ENCODE measurements at regions of chr18 and their contacts with region 1.

Region 1: DNA sequence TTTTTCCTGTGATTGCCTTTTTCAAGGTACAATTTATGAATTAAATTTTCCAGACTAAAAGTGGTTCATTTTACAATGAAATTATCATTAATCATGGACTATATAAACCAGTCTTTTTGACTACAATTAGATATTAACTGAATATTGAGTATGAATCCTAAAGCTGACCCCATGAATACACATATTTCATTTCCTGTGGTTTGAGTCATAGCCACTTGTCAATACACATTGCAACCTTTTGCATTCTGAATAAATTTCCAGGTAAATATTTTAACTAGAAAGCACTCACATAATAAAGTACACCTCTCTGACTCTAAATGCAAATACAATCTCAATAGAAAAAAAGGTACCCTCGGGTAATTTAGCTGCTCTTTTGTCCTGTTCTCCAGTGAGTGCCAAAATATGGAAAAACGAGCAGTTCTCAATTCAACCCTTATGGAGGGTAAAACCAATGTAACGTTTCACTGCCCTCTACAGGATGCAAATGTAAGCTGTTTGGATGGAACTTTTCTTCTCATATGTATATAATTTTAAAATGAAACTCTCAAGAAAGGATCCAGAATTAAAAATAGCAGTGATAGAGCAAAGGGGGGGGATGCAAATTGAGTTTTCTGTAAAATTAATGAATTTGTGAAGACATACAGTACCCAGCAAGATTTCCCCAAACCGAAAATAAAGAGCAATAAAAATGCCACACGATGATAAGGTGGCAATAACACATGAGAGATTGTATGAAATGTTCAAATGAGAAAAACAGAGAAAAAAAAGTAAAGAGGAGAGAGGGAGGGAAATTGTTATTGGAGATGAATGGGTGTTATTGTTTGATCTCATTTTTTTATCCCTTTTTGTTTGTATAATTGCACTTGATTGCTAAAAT is 1795.7 kb upstream of the PIK3C3 start:
- DNase-seq: peak; percentile 41
- ATAC-seq: peak; percentile 85
- H3K4me3 ChIP-seq: peak overlapping the region; percentile 49; the same call in 1 of the 2 replicates
- H3K27ac ChIP-seq: no peak overlapping the region
- H3K4me1 ChIP-seq: no peaks in the 10 kb centered on the region; the same call in 1 of the 2 replicates
- H3K27me3 ChIP-seq: no peaks in the 10 kb centered on the region
- CTCF ChIP-seq: peak; percentile 63

Region 2: GRCh38 chr18:39587586-39587985 is 571.8 kb before region 1 on chr18:
- CTCF ChIA-PET with region 1: no interaction called
- POLR2A ChIA-PET with region 1: no interaction called
- intact Hi-C with region 1: loop called (anchors 10 kb)
- DNase-seq: no peak
- ATAC-seq: no peak
- H3K4me3 ChIP-seq: no peak overlapping the region
- H3K27ac ChIP-seq: no peak overlapping the region
- H3K4me1 ChIP-seq: no peaks in the 10 kb centered on the region
- H3K27me3 ChIP-seq: no peaks in the 10 kb centered on the region
- CTCF ChIP-seq: no peak

Region 3: GRCh38 chr18:39799006-39799405 is 360.4 kb before region 1 on chr18:
- CTCF ChIA-PET with region 1: interaction called, 3 read pairs
- POLR2A ChIA-PET with region 1: no interaction called
- intact Hi-C with region 1: loop called (anchors 10 kb)
- DNase-seq: peak; percentile 16
- ATAC-seq: peak; percentile 65
- H3K4me3 ChIP-seq: peak overlapping the region; percentile 86
- H3K27ac ChIP-seq: no peak overlapping the region
- H3K4me1 ChIP-seq: no peaks in the 10 kb centered on the region
- H3K27me3 ChIP-seq: no peaks in the 10 kb centered on the region
- CTCF ChIP-seq: no peak

Region 4: DNA sequence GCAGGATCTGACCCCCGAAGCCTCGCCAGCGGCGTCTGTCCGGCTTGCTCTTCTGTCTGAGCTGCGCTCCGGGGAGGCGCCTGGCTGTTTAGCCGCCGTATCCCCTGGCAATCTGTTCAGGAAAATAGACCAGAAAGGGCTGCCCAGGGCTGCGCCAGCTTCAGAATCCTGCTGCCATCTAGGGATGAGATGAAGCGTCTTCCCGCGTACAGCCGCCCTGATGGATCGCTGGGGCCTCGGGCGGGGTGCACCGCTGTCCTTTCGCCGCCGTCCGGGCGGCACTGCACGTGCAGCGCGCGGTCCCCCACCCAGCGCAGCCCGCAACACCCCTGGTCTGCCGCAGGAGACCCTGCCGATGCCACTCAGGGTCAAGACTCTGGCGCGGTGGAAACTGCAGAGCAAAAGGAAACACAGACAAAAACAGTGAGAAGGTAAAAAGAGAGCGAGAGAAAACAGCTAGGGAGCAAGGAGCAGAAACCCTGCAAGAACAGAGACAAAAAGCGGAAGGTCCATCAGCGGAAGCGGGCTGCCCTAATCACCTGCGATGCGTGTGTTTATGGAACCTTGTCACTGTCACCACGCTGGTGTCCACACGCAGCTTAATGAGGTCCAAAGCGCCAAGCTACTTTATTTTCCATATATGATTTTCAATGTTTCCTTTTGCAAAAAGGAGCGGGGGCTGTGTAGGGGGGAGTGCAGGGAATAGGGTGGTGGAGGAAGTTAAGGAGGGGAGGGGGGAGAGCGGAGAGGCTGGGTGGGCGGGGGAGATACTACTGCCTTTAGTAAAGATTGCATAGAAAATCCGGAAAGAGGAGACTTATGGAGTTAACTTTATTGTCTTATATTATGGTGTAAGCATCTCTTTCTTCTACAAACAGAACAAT is 317.7 kb before region 1 on chr18:
- CTCF ChIA-PET with region 1: interaction called, 3 read pairs
- POLR2A ChIA-PET with region 1: no interaction called
- intact Hi-C with region 1: loop called (anchors 5 kb)
- DNase-seq: peak; percentile 35
- ATAC-seq: peak; percentile 96
- H3K4me3 ChIP-seq: peak overlapping the region; percentile 73
- H3K27ac ChIP-seq: no peak overlapping the region
- H3K4me1 ChIP-seq: no peaks in the 10 kb centered on the region
- H3K27me3 ChIP-seq: no peaks in the 10 kb centered on the region
- CTCF ChIP-seq: peak; percentile 36; the same call in 1 of the 2 replicates

Region 5: DNA sequence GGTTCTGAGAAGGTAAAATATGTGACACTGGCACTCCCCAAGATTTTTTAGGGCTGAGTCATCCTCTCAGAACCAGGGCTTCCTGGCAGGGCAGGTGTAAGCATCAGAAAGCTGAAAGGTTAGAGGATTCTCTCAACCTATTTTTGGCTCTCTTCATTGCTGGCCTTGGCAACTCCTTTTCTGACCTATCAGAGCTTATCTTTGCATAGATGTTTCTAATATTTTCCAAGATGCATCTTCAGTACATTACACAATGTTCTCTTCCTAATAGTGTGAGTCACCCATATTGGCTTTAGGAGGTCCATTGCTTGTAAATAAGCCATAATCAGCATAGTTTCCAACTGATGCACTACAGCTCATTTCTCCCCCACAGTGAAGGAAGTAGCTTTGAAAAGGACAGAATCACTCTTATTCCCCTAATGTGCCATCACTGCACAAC is 212.7 kb before region 1 on chr18:
- CTCF ChIA-PET with region 1: no interaction called
- POLR2A ChIA-PET with region 1: no interaction called
- intact Hi-C with region 1: loop called (anchors 5 kb)
- DNase-seq: peak; percentile 81
- ATAC-seq: peak; percentile 88
- H3K4me3 ChIP-seq: no peak overlapping the region
- H3K27ac ChIP-seq: peak overlapping the region; percentile 70
- H3K4me1 ChIP-seq: peaks cover 32% of the 10 kb centered on the region
- H3K27me3 ChIP-seq: no peaks in the 10 kb centered on the region
- CTCF ChIP-seq: no peak

Measured in PC-3 (cell line).